ENCODE measurements at regions of chr17 and their contacts with region 1.

Region 1: GRCh38 chr17:48970224-48970623 is 1.8 kb upstream of the GIP start:
- DNase-seq: no peak
- H3K4me3 ChIP-seq: no peak overlapping the region
- H3K27me3 ChIP-seq: no peaks in the 10 kb centered on the region
- CTCF ChIP-seq: no peak

Region 2: GRCh38 chr17:48878918-48879898 is 91.0 kb before region 1 on chr17:
- CTCF ChIA-PET with region 1: no interaction called
- POLR2A ChIA-PET with region 1: no interaction called
- DNase-seq: no peak
- H3K4me3 ChIP-seq: no peak overlapping the region
- H3K27me3 ChIP-seq: no peaks in the 10 kb centered on the region
- CTCF ChIP-seq: peak; percentile 95

Region 3: DNA sequence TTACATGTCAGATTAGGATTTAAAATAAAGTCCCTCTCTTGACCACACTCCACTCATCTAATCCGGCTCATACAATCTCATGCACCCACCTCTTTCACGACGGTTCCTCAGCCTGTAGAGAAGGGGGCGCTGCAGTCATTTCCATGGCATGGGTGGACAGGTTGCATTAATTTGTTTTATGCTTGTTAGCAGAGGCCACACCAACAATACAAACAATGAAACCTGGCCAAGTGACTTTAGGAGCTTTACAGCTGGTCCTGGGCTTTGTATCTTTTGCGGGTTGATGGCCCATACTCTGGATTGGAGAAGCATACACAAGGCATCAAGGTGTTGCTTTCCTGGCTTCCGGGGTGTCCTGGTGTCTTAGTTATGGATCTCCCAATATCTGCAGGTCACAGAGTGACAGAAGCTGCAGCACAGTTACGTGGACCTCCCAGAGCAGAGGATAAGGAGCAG is 15.9 kb before region 1 on chr17:
- CTCF ChIA-PET with region 1: interaction called, 12 read pairs
- POLR2A ChIA-PET with region 1: no interaction called
- DNase-seq: no peak
- H3K4me3 ChIP-seq: no peak overlapping the region
- H3K27me3 ChIP-seq: no peaks in the 10 kb centered on the region
- CTCF ChIP-seq: peak; percentile 64